ENCODE measurements at regions of chr21 and their contacts with region 1.

Region 1: GRCh38 chr21:36060159-36060921 is at the start of gene SETD4:
- DNase-seq: peak; percentile 75 to 97
- H3K4me3 ChIP-seq: peak within 1 kb of the TSS; percentile 67 to 96 (median 95)
- H3K27ac ChIP-seq: peak within 1 kb of the TSS; percentile 85
- H3K4me1 ChIP-seq: peaks cover 0 to 4% (median 3%) of the 10 kb centered on the region in 4 experiments; a peak in 5 of 7 replicates
- H3K27me3 ChIP-seq: no peaks in the 10 kb centered on the region
- CTCF ChIP-seq: no peak
- EP300 ChIP-seq: no peak
- POLR2A ChIP-seq: peak; percentile 42 to 87
- RAD21 ChIP-seq: no peak; a peak in 2 of 4 replicates
- total RNA-seq, gene SETD4: 46.6 and 47.4 TPM in 2 replicates

Region 2: GRCh38 chr21:36047139-36047538 is 13.2 kb before region 1 on chr21:
- CTCF ChIA-PET with region 1: interaction called, 11 read pairs
- POLR2A ChIA-PET with region 1: interaction called, 10 read pairs
- DNase-seq: no peak
- H3K4me3 ChIP-seq: no peak overlapping the region
- H3K27ac ChIP-seq: no peak overlapping the region
- H3K4me1 ChIP-seq: no peaks in the 10 kb centered on the region
- H3K27me3 ChIP-seq: no peaks in the 10 kb centered on the region
- CTCF ChIP-seq: peak in 1 of 3 experiments; percentile 8; a peak in 1 of 4 replicates
- EP300 ChIP-seq: no peak
- POLR2A ChIP-seq: no peak
- RAD21 ChIP-seq: peak; percentile 17 to 46; a peak in 3 of 4 replicates

Region 3: GRCh38 chr21:36104317-36105300 is 44.3 kb after region 1 on chr21:
- CTCF ChIA-PET with region 1: interaction called, 8 read pairs
- POLR2A ChIA-PET with region 1: interaction called, 21 read pairs
- DNase-seq: peak; percentile 51 to 92
- H3K4me3 ChIP-seq: peak overlapping the region; percentile 42 to 82 (median 66)
- H3K27ac ChIP-seq: peak overlapping the region; percentile 61; the same call in 1 of the 2 replicates
- H3K4me1 ChIP-seq: peaks cover 0 to 17% (median 6%) of the 10 kb centered on the region in 4 experiments; a peak in 5 of 7 replicates
- H3K27me3 ChIP-seq: no peaks in the 10 kb centered on the region
- CTCF ChIP-seq: peak; percentile 66 to 71 (median 69)
- EP300 ChIP-seq: no peak; a peak in 1 of 3 replicates
- POLR2A ChIP-seq: no peak
- RAD21 ChIP-seq: peak; percentile 59 to 78

Measured in H1 (cell line).